ENCODE measurements at regions of chr3 and their contacts with region 1.

Region 1: GRCh38 chr3:31704591-31705179 is 172.0 kb downstream of the STT3B start:
- DNase-seq: peak; percentile 69
- ATAC-seq: peak; percentile 98
- H3K4me3 Mint-ChIP-seq: no peak overlapping the region
- H3K27ac Mint-ChIP-seq: peak overlapping the region; percentile 24
- H3K4me1 Mint-ChIP-seq: peaks cover 13% of the 10 kb centered on the region
- H3K27me3 Mint-ChIP-seq: peaks cover 5% of the 10 kb centered on the region

Region 2: DNA sequence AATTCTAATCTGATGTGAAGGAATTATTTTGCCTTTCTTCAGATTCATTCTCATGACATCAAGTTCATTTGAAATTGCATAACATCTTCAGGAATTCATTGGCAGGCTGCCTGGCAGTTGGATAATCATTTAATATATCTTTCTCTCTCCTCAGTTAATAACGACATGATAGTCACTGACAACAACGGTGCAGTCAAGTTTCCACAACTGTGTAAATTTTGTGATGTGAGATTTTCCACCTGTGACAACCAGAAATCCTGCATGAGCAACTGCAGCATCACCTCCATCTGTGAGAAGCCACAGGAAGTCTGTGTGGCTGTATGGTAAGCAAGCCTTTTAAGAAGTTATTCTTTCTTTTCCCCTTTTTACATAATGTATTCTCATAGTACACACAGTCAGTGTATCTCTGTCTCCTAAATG is 1060.1 kb before region 1 on chr3:
- CTCF ChIA-PET with region 1: no interaction called
- POLR2A ChIA-PET with region 1: no interaction called
- intact Hi-C with region 1: no loop called
- DNase-seq: peak; percentile 74
- ATAC-seq: peak; percentile 62
- H3K4me3 Mint-ChIP-seq: peak overlapping the region; percentile 58
- H3K27ac Mint-ChIP-seq: peak overlapping the region; percentile 94
- H3K4me1 Mint-ChIP-seq: peaks cover 94% of the 10 kb centered on the region
- H3K27me3 Mint-ChIP-seq: no peaks in the 10 kb centered on the region

Region 3: GRCh38 chr3:30779686-30780287 is 924.9 kb before region 1 on chr3:
- CTCF ChIA-PET with region 1: no interaction called
- POLR2A ChIA-PET with region 1: no interaction called
- intact Hi-C with region 1: loop called in 1 of 2 experiments (anchors 5 kb)
- DNase-seq: peak; percentile 29
- ATAC-seq: peak; percentile 36
- H3K4me3 Mint-ChIP-seq: no peak overlapping the region
- H3K27ac Mint-ChIP-seq: no peak overlapping the region
- H3K4me1 Mint-ChIP-seq: no peaks in the 10 kb centered on the region
- H3K27me3 Mint-ChIP-seq: peaks cover 10% of the 10 kb centered on the region

Region 4: DNA sequence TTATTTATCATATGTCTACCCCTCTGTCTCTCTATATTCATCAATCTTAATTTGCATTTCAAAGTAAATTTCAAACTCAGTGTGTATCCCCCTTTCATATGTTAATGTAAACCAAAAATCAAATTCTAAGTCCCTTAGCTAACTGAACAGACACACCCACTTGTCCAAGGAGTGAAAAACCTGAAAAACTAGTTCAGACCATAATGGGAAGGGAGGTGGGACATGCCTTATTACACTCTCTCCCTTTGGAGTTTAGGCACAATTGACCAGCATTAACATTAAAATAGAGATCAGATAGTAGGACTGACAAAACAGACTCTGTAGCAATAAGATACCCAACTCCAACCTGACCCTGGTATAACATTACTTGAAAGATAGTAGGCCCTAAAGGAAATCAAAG is 562.6 kb before region 1 on chr3:
- CTCF ChIA-PET with region 1: no interaction called
- POLR2A ChIA-PET with region 1: no interaction called
- intact Hi-C with region 1: loop called in 1 of 2 experiments (anchors 10 kb)
- DNase-seq: no peak
- ATAC-seq: no peak
- H3K4me3 Mint-ChIP-seq: no peak overlapping the region
- H3K27ac Mint-ChIP-seq: no peak overlapping the region
- H3K4me1 Mint-ChIP-seq: no peaks in the 10 kb centered on the region
- H3K27me3 Mint-ChIP-seq: no peaks in the 10 kb centered on the region

Region 5: GRCh38 chr3:31634481-31634880 is 70.2 kb before region 1 on chr3:
- CTCF ChIA-PET with region 1: no interaction called
- POLR2A ChIA-PET with region 1: no interaction called
- intact Hi-C with region 1: loop called in 1 of 2 experiments (anchors 10 kb)
- DNase-seq: no peak
- ATAC-seq: no peak
- H3K4me3 Mint-ChIP-seq: no peak overlapping the region
- H3K27ac Mint-ChIP-seq: peak overlapping the region; percentile 3
- H3K4me1 Mint-ChIP-seq: peaks cover 41% of the 10 kb centered on the region
- H3K27me3 Mint-ChIP-seq: no peaks in the 10 kb centered on the region

Measured in activated CD4-positive, alpha-beta T cell treated with anti-CD3 and anti-CD28 coated beads for 36 hours (primary cell).